ENCODE measurements at regions of chr3 and their contacts with region 1.

Region 1: GRCh38 chr3:64355401-64355807 is 130.1 kb upstream of the PRICKLE2 start:
- DNase-seq: no peak
- H3K4me3 ChIP-seq: no peak overlapping the region
- H3K27ac ChIP-seq: no peak overlapping the region
- H3K4me1 ChIP-seq: no peaks in the 10 kb centered on the region
- CTCF ChIP-seq: no peak

Region 2: GRCh38 chr3:64299206-64299605 is 56.2 kb before region 1 on chr3:
- CTCF ChIA-PET with region 1: no interaction called
- POLR2A ChIA-PET with region 1: interaction called, 11 read pairs
- intact Hi-C with region 1: no loop called
- DNase-seq: no peak
- H3K4me3 ChIP-seq: no peak overlapping the region
- H3K27ac ChIP-seq: no peak overlapping the region
- H3K4me1 ChIP-seq: no peaks in the 10 kb centered on the region
- CTCF ChIP-seq: no peak

Region 3: GRCh38 chr3:64368257-64369020 is 13.0 kb after region 1 on chr3:
- CTCF ChIA-PET with region 1: no interaction called
- POLR2A ChIA-PET with region 1: no interaction called
- intact Hi-C with region 1: no loop called
- DNase-seq: no peak
- H3K4me3 ChIP-seq: no peak overlapping the region
- H3K27ac ChIP-seq: no peak overlapping the region
- H3K4me1 ChIP-seq: no peaks in the 10 kb centered on the region
- CTCF ChIP-seq: no peak

Region 4: GRCh38 chr3:64533617-64534317 is 178.4 kb after region 1 on chr3:
- CTCF ChIA-PET with region 1: no interaction called
- POLR2A ChIA-PET with region 1: no interaction called
- intact Hi-C with region 1: no loop called
- DNase-seq: peak; percentile 38
- H3K4me3 ChIP-seq: no peak overlapping the region
- H3K27ac ChIP-seq: no peak overlapping the region
- H3K4me1 ChIP-seq: no peaks in the 10 kb centered on the region
- CTCF ChIP-seq: peak; percentile 77

Region 5: GRCh38 chr3:65196688-65197087 is 841.3 kb after region 1 on chr3:
- CTCF ChIA-PET with region 1: no interaction called
- POLR2A ChIA-PET with region 1: no interaction called
- intact Hi-C with region 1: no loop called
- DNase-seq: no peak
- H3K4me3 ChIP-seq: no peak overlapping the region
- H3K27ac ChIP-seq: no peak overlapping the region
- H3K4me1 ChIP-seq: no peaks in the 10 kb centered on the region
- CTCF ChIP-seq: no peak